Mammary epithelial cell (primary cell): ENCODE measurements at regions of chrX and their contacts with region 1.

Region 1: DNA sequence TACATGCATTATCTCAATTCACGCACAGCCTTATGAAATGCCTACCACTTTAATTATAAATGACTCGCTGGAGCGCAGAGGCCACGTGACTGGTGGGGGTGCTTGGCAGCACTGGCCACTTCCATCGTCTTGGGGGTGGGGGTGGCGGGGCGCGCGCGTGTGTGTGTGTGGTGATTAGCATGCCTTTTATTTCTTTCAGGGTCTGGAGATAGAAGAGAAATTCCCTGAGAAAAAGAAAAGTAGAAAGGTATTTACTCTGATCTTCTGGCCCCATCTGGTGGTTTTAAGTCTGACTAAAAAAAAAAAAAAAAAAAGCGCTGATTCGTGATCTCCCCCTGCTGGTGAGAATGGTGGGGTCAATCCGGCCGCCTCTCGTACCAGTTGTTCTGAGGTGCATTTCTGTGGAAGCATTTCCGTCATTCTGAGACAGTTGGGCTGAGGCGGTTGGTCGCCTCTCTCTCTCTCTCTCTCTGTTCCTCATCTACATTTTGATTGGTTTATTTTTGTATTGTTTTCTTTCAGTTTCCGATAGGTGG is at the start of gene CCNB3:
- DNase-seq: peak; percentile 70
- H3K4me3 ChIP-seq: peak within 1 kb of the TSS; percentile 17 to 40 (median 32)
- H3K27ac ChIP-seq: peak within 1 kb of the TSS; percentile 27
- H3K4me1 ChIP-seq: no peaks in the 10 kb centered on the region
- H3K27me3 ChIP-seq: no peaks in the 10 kb centered on the region
- CTCF ChIP-seq: peak; percentile 45 to 65
- total RNA-seq, gene CCNB3: 0.50 to 0.87 TPM

Region 2: GRCh38 chrX:49656533-49656932 is 547.9 kb before region 1 on chrX:
- CTCF ChIA-PET with region 1: no interaction called
- dilution Hi-C with region 1: no loop called
- in situ Hi-C with region 1: no loop called
- intact Hi-C with region 1: no loop called
- DNase-seq: no peak
- H3K4me3 ChIP-seq: no peak overlapping the region
- H3K27ac ChIP-seq: no peak overlapping the region
- H3K4me1 ChIP-seq: no peaks in the 10 kb centered on the region
- H3K27me3 ChIP-seq: no peaks in the 10 kb centered on the region
- CTCF ChIP-seq: no peak

Region 3: GRCh38 chrX:49878834-49879659 is 325.4 kb before region 1 on chrX and contains the start of gene USP27X:
- CTCF ChIA-PET with region 1: no interaction called
- dilution Hi-C with region 1: no loop called
- in situ Hi-C with region 1: no loop called
- intact Hi-C with region 1: loop called (anchors 1 kb)
- DNase-seq: peak; percentile 75
- H3K4me3 ChIP-seq: peak within 1 kb of the TSS; percentile 37 to 64 (median 51)
- H3K27ac ChIP-seq: peak within 1 kb of the TSS; percentile 25
- H3K4me1 ChIP-seq: peaks cover 10% of the 10 kb centered on the region
- H3K27me3 ChIP-seq: no peaks in the 10 kb centered on the region
- CTCF ChIP-seq: peak; percentile 40 to 49
- total RNA-seq, gene USP27X: 2.4 to 2.5 TPM

Region 4: GRCh38 chrX:50081282-50081889 is 123.0 kb before region 1 on chrX:
- CTCF ChIA-PET with region 1: interaction called, 17 read pairs
- dilution Hi-C with region 1: no loop called
- in situ Hi-C with region 1: no loop called
- intact Hi-C with region 1: no loop called
- DNase-seq: no peak
- H3K4me3 ChIP-seq: no peak overlapping the region
- H3K27ac ChIP-seq: no peak overlapping the region
- H3K4me1 ChIP-seq: no peaks in the 10 kb centered on the region
- H3K27me3 ChIP-seq: peaks cover 2% of the 10 kb centered on the region
- CTCF ChIP-seq: peak; percentile 24 to 46

Region 5: DNA sequence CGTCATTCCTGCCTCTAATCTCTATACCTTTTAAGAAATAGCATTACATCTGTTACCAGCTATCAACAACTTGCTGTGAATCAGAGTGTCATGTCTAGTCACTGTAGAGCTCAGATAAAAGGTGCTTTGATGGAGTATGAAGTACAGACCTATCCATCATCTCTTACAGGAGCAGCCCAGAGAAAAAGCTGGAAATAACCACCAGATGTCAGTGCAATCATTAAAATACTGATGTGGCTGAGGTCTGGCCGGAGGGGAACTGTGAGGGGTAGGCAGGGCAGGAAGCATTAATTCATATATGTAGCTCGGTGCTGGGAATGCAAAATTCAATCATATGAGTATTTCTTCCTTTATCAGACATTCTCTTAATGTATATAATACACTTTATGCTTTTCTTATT is 104.2 kb before region 1 on chrX:
- CTCF ChIA-PET with region 1: interaction called, 4 read pairs
- dilution Hi-C with region 1: no loop called
- in situ Hi-C with region 1: no loop called
- intact Hi-C with region 1: loop called (anchors 1 kb)
- DNase-seq: peak; percentile 2
- H3K4me3 ChIP-seq: no peak overlapping the region
- H3K27ac ChIP-seq: no peak overlapping the region
- H3K4me1 ChIP-seq: no peaks in the 10 kb centered on the region
- H3K27me3 ChIP-seq: no peaks in the 10 kb centered on the region
- CTCF ChIP-seq: peak; percentile 9 to 38